ENCODE measurements at regions of chr12 and their contacts with region 1.

Region 1: GRCh38 chr12:57049890-57050289 is at the start of gene MYO1A:
- DNase-seq: no peak
- ATAC-seq: no peak
- H3K4me3 ChIP-seq: no peak within 1 kb of the TSS
- H3K27ac ChIP-seq: no peak within 1 kb of the TSS
- H3K4me1 ChIP-seq: peaks cover 0 to 29% (median 0%) of the 10 kb centered on the region in 9 donors
- H3K27me3 ChIP-seq: peaks cover 0 to 10% (median 5%) of the 10 kb centered on the region in 7 donors
- CTCF ChIP-seq: no peak
- total RNA-seq, gene MYO1A: 0.08 TPM in 1 of 10 donors, not detected in the others

Region 2: GRCh38 chr12:56766535-56766934 is 283.4 kb before region 1 on chr12:
- intact Hi-C with region 1: loop called in 1 of 10 experiments (anchors 10 kb)
- DNase-seq: no peak
- ATAC-seq: peak in 2 of 8 donors; percentile 39 to 74
- H3K4me3 ChIP-seq: no peak overlapping the region
- H3K27ac ChIP-seq: no peak overlapping the region
- H3K4me1 ChIP-seq: no peaks in the 10 kb centered on the region
- H3K27me3 ChIP-seq: no peaks in the 10 kb centered on the region
- CTCF ChIP-seq: no peak